ENCODE measurements at regions of chr19 and their contacts with region 1.

Region 1: GRCh38 chr19:6218491-6219162 is 61.1 kb downstream of the MLLT1 start:
- DNase-seq: peak; percentile 79
- H3K4me3 ChIP-seq: no peak overlapping the region
- H3K27ac ChIP-seq: peak overlapping the region; percentile 81
- H3K4me1 ChIP-seq: peaks cover 22% of the 10 kb centered on the region
- H3K27me3 ChIP-seq: no peaks in the 10 kb centered on the region
- CTCF ChIP-seq: peak; percentile 87 to 91
- POLR2A ChIP-seq: no peak

Region 2: DNA sequence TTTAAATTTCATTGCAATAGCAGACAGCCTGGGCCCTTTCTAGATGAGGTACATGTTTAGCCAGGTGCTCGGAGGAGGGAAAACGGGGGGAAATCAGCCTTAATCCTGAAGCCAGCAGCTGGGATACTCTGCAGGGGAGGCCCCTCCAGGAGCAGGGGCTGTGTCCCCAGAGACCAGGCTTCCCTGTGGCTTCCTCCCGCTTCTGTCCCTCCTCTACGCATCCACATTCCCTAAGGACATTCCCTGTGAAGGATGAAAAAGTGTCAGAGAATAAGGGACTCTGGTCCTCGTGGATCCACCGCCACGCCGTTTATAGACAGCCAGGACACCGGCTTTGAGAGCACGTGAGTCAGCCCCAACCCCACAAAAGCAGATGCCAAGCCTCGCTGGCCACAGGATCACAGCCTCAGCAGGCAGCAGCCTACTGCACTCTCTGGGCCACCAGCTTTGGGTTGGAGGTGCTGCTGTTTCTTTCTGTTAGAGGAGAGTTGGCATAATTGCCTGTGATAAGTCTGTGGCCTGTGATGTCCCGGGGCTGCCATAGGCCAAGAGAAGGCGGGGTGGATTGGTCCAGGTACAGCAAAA is 204.0 kb before region 1 on chr19:
- CTCF ChIA-PET with region 1: no interaction called
- POLR2A ChIA-PET with region 1: no interaction called
- dilution Hi-C with region 1: no loop called
- intact Hi-C with region 1: no loop called
- DNase-seq: no peak
- H3K4me3 ChIP-seq: no peak overlapping the region
- H3K27ac ChIP-seq: peak overlapping the region; percentile 64
- H3K4me1 ChIP-seq: peaks cover 14% of the 10 kb centered on the region
- H3K27me3 ChIP-seq: no peaks in the 10 kb centered on the region
- CTCF ChIP-seq: no peak
- POLR2A ChIP-seq: no peak

Region 3: DNA sequence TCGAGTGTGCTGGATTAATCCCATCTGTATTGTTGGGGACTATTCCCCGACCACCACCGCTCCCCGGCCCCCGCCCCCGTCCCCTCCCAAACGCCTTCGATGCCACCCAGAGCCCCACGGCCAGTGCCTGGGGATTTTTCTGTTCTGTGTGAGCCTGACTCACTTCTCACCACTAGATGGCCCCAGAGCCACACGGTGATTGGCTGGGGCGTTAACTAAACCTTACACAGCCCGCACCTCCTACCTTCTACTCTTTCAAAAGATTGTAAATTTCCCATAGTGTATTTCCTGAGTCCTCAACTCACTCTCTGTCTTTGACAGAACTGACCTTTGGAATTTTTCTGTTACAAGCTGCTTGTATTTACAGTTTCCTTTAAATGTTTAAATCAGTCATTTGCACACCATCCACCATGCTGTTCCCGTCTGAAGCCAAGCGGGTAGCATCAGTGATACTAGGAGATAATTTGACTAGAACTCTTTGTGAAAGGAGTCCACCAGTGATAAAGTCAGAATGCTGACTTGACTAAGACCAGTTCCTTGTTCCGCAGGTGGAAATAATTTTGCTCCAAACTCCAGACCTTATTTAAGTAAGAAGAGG is 169.7 kb before region 1 on chr19:
- CTCF ChIA-PET with region 1: interaction called, 7 read pairs
- POLR2A ChIA-PET with region 1: no interaction called
- dilution Hi-C with region 1: no loop called
- intact Hi-C with region 1: loop called (anchors 5 kb)
- DNase-seq: peak; percentile 77
- H3K4me3 ChIP-seq: no peak overlapping the region
- H3K27ac ChIP-seq: peak overlapping the region; percentile 20
- H3K4me1 ChIP-seq: peaks cover 4% of the 10 kb centered on the region
- H3K27me3 ChIP-seq: no peaks in the 10 kb centered on the region
- CTCF ChIP-seq: peak; percentile 61 to 83
- POLR2A ChIP-seq: no peak

Region 4: DNA sequence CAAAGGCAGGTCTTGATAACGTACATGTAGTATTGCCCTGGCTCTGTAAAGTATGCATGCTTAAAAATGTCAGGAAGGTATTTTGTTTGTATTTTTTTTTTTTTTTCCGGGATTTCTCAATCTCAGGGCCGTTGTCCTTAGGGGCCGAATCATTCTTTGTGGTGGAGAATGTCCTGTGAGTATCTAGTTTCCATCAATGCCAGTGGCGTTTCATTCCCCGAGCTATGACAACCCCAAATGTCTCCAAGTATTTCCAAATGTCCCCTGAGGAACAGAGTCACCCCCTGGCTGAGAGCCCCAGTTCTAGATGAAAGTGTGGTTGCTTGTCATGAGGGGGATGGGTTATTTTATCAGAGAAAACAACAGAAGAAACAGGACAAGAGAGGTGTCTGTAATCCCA is 14.4 kb before region 1 on chr19:
- CTCF ChIA-PET with region 1: interaction called, 11 read pairs
- POLR2A ChIA-PET with region 1: no interaction called
- dilution Hi-C with region 1: no loop called
- intact Hi-C with region 1: no loop called
- DNase-seq: no peak
- H3K4me3 ChIP-seq: no peak overlapping the region
- H3K27ac ChIP-seq: no peak overlapping the region
- H3K4me1 ChIP-seq: peaks cover 4% of the 10 kb centered on the region
- H3K27me3 ChIP-seq: no peaks in the 10 kb centered on the region
- CTCF ChIP-seq: no peak
- POLR2A ChIP-seq: no peak

Region 5: DNA sequence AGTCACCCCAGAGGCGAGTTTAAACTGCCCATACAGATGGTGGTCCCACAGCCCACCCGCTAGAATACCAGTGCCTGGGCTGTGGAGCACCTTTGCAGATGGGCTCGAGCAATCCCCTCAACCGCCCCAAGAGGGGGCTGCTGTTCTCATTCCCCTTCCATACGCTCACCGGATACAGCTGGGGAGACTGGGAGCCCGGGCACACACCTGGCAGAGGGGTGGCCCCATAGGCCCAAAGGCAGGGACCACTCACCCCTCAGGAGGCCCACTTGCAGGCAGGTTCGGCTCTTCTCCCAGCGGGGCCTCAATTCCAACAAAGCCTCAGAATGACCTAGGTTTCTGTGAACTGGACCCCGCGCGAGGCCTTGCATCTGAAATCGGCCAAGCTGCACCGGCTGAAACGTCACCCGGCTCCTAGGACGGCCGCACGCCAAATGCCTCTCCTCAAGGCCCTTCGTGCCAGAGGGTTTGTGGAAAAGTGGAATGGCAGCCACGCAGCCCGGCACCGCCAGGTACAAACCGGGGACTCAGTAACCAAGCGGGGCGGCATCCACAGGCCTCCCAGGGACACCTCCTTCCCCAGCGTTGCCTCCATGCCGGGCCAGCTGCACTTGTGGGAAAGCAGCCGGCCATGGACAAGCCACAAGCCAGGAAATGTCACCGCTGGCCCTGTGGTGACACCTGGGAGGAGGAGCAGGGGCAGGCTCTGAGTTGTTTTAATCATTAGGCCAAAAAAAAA is 42.5 kb after region 1 on chr19:
- CTCF ChIA-PET with region 1: interaction called, 34 read pairs
- POLR2A ChIA-PET with region 1: no interaction called
- dilution Hi-C with region 1: no loop called
- intact Hi-C with region 1: loop called (anchors 1 kb)
- DNase-seq: peak; percentile 44
- H3K4me3 ChIP-seq: no peak overlapping the region
- H3K27ac ChIP-seq: no peak overlapping the region
- H3K4me1 ChIP-seq: no peaks in the 10 kb centered on the region
- H3K27me3 ChIP-seq: no peaks in the 10 kb centered on the region
- CTCF ChIP-seq: peak; percentile 59 to 76
- POLR2A ChIP-seq: no peak

Region 6: GRCh38 chr19:6279931-6280591 is 61.4 kb after region 1 on chr19 and contains the start of gene MLLT1:
- CTCF ChIA-PET with region 1: interaction called, 19 read pairs
- POLR2A ChIA-PET with region 1: no interaction called
- dilution Hi-C with region 1: loop called (anchors 10 kb)
- intact Hi-C with region 1: loop called (anchors 1 kb)
- DNase-seq: peak; percentile 96
- H3K4me3 ChIP-seq: peak within 1 kb of the TSS; percentile 70 to 90 (median 82)
- H3K27ac ChIP-seq: peak within 1 kb of the TSS; percentile 73
- H3K4me1 ChIP-seq: peaks cover 39% of the 10 kb centered on the region
- H3K27me3 ChIP-seq: no peaks in the 10 kb centered on the region
- CTCF ChIP-seq: peak; percentile 37 to 71
- POLR2A ChIP-seq: no peak
- total RNA-seq, gene MLLT1: 79.2 and 84.8 TPM in 2 replicates

Region 7: DNA sequence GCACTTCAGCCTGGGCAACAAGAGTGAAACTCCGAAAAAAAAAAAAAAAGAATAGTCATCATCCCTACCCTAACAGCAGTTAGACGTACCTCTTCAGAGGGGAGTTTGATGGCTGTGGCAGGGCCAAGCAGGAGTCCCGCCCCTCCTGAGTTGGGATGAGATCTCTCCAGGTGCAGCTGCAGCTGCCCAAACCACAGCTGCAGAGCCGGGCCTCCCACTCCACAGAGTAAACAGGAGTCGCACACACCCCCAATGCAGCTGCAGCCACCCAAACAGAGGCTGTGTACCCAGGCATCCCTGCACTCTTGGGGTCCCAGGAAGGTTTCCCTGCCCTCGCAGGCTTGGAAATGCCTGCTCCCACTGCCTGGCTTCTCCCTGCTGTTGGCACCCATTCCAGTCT is 78.6 kb after region 1 on chr19:
- CTCF ChIA-PET with region 1: interaction called, 199 read pairs
- POLR2A ChIA-PET with region 1: no interaction called
- dilution Hi-C with region 1: no loop called
- intact Hi-C with region 1: loop called (anchors 1 kb)
- DNase-seq: no peak
- H3K4me3 ChIP-seq: no peak overlapping the region
- H3K27ac ChIP-seq: no peak overlapping the region
- H3K4me1 ChIP-seq: no peaks in the 10 kb centered on the region
- H3K27me3 ChIP-seq: no peaks in the 10 kb centered on the region
- CTCF ChIP-seq: no peak
- POLR2A ChIP-seq: no peak

Region 8: GRCh38 chr19:6372594-6373095 is 154.0 kb after region 1 on chr19 and contains the start of gene ALKBH7:
- CTCF ChIA-PET with region 1: interaction called, 5 read pairs
- POLR2A ChIA-PET with region 1: no interaction called
- dilution Hi-C with region 1: no loop called
- intact Hi-C with region 1: loop called (anchors 1 kb)
- DNase-seq: peak; percentile 99
- H3K4me3 ChIP-seq: peak within 1 kb of the TSS; percentile 55 to 82 (median 73)
- H3K27ac ChIP-seq: peak within 1 kb of the TSS; percentile 84
- H3K4me1 ChIP-seq: peaks cover 2% of the 10 kb centered on the region
- H3K27me3 ChIP-seq: no peaks in the 10 kb centered on the region
- CTCF ChIP-seq: no peak
- POLR2A ChIP-seq: no peak
- total RNA-seq, gene ALKBH7: 48.8 and 50.4 TPM in 2 replicates

Region 9: DNA sequence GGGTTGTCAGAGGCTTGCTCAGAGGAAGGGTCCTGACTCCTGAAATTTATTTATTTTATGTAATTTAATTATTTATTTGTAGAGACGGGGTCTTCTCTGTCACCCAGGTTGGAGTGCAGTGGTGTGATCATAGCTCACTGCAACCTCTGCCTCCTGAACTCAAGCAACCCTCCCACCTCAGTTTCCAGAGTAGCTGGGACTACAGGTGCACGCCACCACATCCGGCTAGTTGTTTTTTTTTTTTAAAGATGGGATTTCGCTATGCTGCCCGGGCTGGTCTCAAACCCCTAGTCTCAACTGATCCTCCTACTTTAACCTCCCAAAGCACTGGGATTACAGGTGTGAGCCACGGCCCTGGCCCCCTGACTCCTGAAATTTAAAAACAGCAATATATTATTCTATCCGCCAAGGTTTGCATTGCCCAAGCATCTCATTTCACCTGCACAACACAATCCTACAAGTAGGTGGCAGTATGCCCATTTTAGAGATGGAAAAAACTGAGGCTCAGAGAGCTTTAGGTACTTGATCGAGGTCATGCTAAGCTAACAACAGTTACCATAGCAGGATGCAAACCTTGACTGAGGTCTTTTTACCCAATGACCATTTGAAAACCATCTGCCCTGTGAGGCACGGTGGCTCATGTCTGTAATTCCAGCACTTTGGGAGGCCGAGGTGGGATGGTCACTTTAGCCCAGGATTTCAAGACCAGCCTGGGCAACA is 1148.2 kb after region 1 on chr19:
- CTCF ChIA-PET with region 1: no interaction called
- POLR2A ChIA-PET with region 1: no interaction called
- dilution Hi-C with region 1: no loop called
- intact Hi-C with region 1: no loop called
- DNase-seq: peak; percentile 32
- H3K4me3 ChIP-seq: no peak overlapping the region
- H3K27ac ChIP-seq: no peak overlapping the region
- H3K4me1 ChIP-seq: no peaks in the 10 kb centered on the region
- H3K27me3 ChIP-seq: no peaks in the 10 kb centered on the region
- CTCF ChIP-seq: peak; percentile 2 to 45
- POLR2A ChIP-seq: no peak